ENCODE measurements at regions of chr18 and their contacts with region 1.

Region 1: DNA sequence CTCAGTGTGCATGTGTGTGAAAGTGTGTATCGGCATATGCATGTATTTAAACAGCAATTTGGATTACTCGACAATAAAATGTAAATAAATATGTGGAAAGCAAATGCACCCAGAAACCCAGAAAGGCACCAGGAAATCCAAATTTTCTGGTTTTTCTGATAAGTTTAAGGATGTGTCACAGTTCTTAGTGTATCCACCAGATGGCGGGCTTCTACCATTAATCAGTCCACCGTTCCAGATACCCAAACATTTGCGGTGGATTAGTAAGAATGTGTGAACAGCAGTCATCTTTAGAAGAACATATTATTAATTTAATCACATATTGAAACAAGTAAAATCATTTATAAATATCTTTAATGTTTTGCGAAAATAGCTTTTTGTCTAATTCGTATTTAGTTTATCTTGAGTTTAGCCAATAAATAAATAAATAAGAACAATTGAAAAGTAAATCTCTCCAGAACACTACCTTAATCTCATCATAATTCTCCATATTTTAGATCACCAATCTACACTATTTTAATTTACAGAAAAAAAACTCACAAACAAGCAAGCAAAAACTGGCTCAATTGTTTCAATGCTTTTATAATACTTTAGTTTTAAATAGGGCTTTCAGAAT is 298.9 kb downstream of the DSEL start:
- DNase-seq: peak; percentile 68
- H3K4me3 Mint-ChIP-seq: no peak overlapping the region
- H3K27ac Mint-ChIP-seq: no peak overlapping the region
- H3K4me1 Mint-ChIP-seq: no peaks in the 10 kb centered on the region
- H3K27me3 Mint-ChIP-seq: no peaks in the 10 kb centered on the region
- CTCF ChIP-seq: peak; percentile 72

Region 2: GRCh38 chr18:67864677-67865340 is 647.1 kb after region 1 on chr18:
- CTCF ChIA-PET with region 1: no interaction called
- POLR2A ChIA-PET with region 1: no interaction called
- intact Hi-C with region 1: loop called (anchors 10 kb)
- DNase-seq: peak; percentile 17
- H3K4me3 Mint-ChIP-seq: no peak overlapping the region
- H3K27ac Mint-ChIP-seq: no peak overlapping the region
- H3K4me1 Mint-ChIP-seq: peaks cover 12% of the 10 kb centered on the region
- H3K27me3 Mint-ChIP-seq: no peaks in the 10 kb centered on the region
- CTCF ChIP-seq: no peak

Region 3: DNA sequence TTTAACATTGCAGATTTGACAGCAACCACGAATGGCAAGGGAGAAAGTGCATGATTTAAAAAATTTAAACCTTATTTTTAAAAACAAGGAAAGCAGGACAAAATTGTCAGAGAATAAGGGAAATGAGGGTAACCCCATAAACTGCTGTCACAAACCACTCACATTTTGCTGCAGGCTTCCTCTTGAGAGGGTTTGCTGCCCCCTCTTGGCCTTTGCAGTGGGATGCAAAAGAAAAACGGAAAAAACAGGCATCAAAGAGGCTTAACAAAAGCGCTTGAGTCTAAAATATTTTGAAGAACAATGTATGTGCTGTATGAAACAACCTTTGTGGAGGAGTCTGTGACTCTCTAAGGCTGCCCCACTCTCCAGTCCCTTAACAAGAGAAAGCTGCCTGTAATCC is 1405.7 kb after region 1 on chr18:
- CTCF ChIA-PET with region 1: interaction called, 3 read pairs
- POLR2A ChIA-PET with region 1: no interaction called
- intact Hi-C with region 1: loop called (anchors 1 kb)
- DNase-seq: peak; percentile 76
- H3K4me3 Mint-ChIP-seq: no peak overlapping the region
- H3K27ac Mint-ChIP-seq: no peak overlapping the region
- H3K4me1 Mint-ChIP-seq: no peaks in the 10 kb centered on the region
- H3K27me3 Mint-ChIP-seq: no peaks in the 10 kb centered on the region
- CTCF ChIP-seq: peak; percentile 78

Region 4: GRCh38 chr18:68660354-68661183 is 1442.9 kb after region 1 on chr18:
- CTCF ChIA-PET with region 1: interaction called, 22 read pairs
- POLR2A ChIA-PET with region 1: interaction called, 3 read pairs
- intact Hi-C with region 1: loop called (anchors 1 kb)
- DNase-seq: peak; percentile 61
- H3K4me3 Mint-ChIP-seq: no peak overlapping the region
- H3K27ac Mint-ChIP-seq: no peak overlapping the region
- H3K4me1 Mint-ChIP-seq: no peaks in the 10 kb centered on the region
- H3K27me3 Mint-ChIP-seq: no peaks in the 10 kb centered on the region
- CTCF ChIP-seq: peak; percentile 48

Region 5: GRCh38 chr18:68735483-68736343 is 1518.1 kb after region 1 on chr18:
- CTCF ChIA-PET with region 1: no interaction called
- POLR2A ChIA-PET with region 1: no interaction called
- intact Hi-C with region 1: loop called (anchors 2 kb)
- DNase-seq: peak; percentile 70
- H3K4me3 Mint-ChIP-seq: no peak overlapping the region
- H3K27ac Mint-ChIP-seq: no peak overlapping the region
- H3K4me1 Mint-ChIP-seq: peaks cover 15% of the 10 kb centered on the region
- H3K27me3 Mint-ChIP-seq: no peaks in the 10 kb centered on the region
- CTCF ChIP-seq: peak; percentile 75

Region 6: GRCh38 chr18:68840554-68841263 is 1623.0 kb after region 1 on chr18:
- CTCF ChIA-PET with region 1: no interaction called
- POLR2A ChIA-PET with region 1: no interaction called
- intact Hi-C with region 1: loop called (anchors 5 kb)
- DNase-seq: peak; percentile 95
- H3K4me3 Mint-ChIP-seq: peak overlapping the region; percentile 15
- H3K27ac Mint-ChIP-seq: peak overlapping the region; percentile 33
- H3K4me1 Mint-ChIP-seq: peaks cover 27% of the 10 kb centered on the region
- H3K27me3 Mint-ChIP-seq: no peaks in the 10 kb centered on the region
- CTCF ChIP-seq: no peak

Measured in MCF 10A (cell line).